RWPE1 (cell line): ENCODE measurements at regions of chr10 and their contacts with region 1.

Region 1: GRCh38 chr10:71569775-71570588 is 149.6 kb downstream of the C10orf105 start:
- DNase-seq: peak; percentile 78
- H3K27ac ChIP-seq: no peak overlapping the region
- CTCF ChIP-seq: peak; percentile 79

Region 2: GRCh38 chr10:71383972-71384687 is 185.9 kb before region 1 on chr10:
- CTCF ChIA-PET with region 1: interaction called, 28 read pairs
- POLR2A ChIA-PET with region 1: no interaction called
- DNase-seq: peak; percentile 82
- H3K27ac ChIP-seq: no peak overlapping the region
- CTCF ChIP-seq: peak; percentile 92

Region 3: GRCh38 chr10:71424496-71425194 is 145.3 kb before region 1 on chr10:
- CTCF ChIA-PET with region 1: no interaction called
- POLR2A ChIA-PET with region 1: no interaction called
- DNase-seq: no peak
- H3K27ac ChIP-seq: no peak overlapping the region
- CTCF ChIP-seq: no peak

Region 4: DNA sequence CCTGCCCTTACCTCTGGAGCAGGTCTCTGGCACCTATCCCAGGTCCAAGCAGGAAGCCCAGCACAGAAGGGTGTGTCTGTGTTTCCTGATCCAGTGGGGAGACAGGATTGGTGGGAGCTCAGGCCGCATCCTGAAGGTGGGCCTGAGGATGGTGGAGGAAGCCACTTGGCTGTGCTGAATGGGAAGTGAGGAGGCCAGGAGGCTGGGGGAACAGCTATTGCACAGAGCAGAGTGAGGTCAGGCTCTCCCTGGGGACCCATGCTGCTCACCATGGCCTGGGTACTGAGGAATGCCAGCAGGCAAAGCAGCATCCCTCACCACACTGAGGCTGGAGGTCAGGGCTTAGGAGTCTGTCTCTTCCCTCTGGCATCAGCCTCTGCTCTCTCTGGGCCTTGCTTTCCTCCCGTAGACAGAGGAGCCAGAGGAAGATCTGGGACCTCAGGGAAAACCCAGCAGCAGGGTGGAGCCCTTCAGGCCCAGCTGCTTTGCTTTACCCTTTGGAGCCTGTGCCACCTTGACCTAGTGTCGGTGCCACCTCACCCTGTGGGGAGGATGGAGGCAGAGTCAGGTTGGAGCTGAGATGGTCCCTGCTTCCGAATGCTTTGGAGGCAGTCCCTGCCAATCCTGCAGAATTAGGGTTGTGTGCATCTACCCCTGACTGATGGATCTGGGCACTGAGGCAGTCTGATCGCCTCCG is 134.3 kb before region 1 on chr10:
- CTCF ChIA-PET with region 1: no interaction called
- POLR2A ChIA-PET with region 1: no interaction called
- DNase-seq: no peak
- H3K27ac ChIP-seq: no peak overlapping the region
- CTCF ChIP-seq: no peak

Region 5: DNA sequence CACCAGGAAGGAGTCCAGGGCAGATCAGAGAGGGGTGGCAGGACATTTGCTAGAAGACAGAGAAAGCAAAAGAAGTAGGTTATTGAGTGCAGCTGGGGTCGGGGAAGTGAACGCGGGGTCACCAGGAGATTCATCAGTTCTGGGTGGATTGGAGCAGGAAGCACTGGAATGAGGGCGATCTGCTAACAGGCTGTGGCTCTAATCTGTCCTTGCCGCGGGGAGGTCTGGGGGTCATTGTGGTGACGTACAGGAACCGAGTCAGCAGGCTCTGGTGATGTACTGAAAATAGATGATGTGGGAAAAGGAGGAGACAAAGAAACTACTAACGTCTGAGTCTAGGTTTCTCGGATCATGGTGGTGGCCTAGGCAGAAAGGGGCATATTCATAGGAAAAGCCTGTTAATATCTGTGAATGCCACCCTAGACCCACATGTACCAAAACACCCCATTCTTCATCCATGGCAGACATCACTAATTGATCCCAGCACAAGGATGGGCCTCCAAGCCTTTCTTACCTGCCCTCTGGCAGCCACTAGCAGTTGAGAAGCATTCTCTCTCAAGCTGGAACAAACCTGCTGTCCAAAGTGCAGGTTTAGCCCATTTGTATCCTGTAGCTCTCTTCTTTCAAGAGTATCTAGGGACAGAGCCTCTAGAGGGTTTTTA is 15.1 kb after region 1 on chr10:
- CTCF ChIA-PET with region 1: interaction called, 14 read pairs
- POLR2A ChIA-PET with region 1: no interaction called
- DNase-seq: no peak
- H3K27ac ChIP-seq: no peak overlapping the region
- CTCF ChIP-seq: no peak